HCT116 (cell line): ENCODE measurements at regions of chr5 and their contacts with region 1.

Region 1: GRCh38 chr5:6765612-6766525 is 52.6 kb downstream of the TENT4A start:
- DNase-seq: peak; percentile 71
- ATAC-seq: peak; percentile 79
- H3K4me3 ChIP-seq: peak overlapping the region; percentile 28 to 48
- H3K27ac ChIP-seq: peak overlapping the region; percentile 50
- H3K4me1 ChIP-seq: peaks cover 21 to 23% of the 10 kb centered on the region in 2 experiments
- H3K27me3 ChIP-seq: no peaks in the 10 kb centered on the region
- CTCF ChIP-seq: peak; percentile 68 to 93 (median 88); a peak in 5 of 6 replicates
- POLR2A ChIP-seq: no peak
- RAD21 ChIP-seq: peak; percentile 89

Region 2: GRCh38 chr5:6837519-6838110 is 71.7 kb after region 1 on chr5:
- CTCF ChIA-PET with region 1: interaction called, 4 read pairs
- POLR2A ChIA-PET with region 1: no interaction called
- RAD21 ChIA-PET with region 1: no interaction called
- intact Hi-C with region 1: loop called (anchors 1 kb)
- DNase-seq: no peak
- ATAC-seq: peak; percentile 66
- H3K4me3 ChIP-seq: no peak overlapping the region
- H3K27ac ChIP-seq: no peak overlapping the region
- H3K4me1 ChIP-seq: no peaks in the 10 kb centered on the region
- H3K27me3 ChIP-seq: no peaks in the 10 kb centered on the region
- CTCF ChIP-seq: peak; percentile 37 to 87 (median 86); a peak in 5 of 6 replicates
- POLR2A ChIP-seq: no peak
- RAD21 ChIP-seq: peak; percentile 58

Region 3: DNA sequence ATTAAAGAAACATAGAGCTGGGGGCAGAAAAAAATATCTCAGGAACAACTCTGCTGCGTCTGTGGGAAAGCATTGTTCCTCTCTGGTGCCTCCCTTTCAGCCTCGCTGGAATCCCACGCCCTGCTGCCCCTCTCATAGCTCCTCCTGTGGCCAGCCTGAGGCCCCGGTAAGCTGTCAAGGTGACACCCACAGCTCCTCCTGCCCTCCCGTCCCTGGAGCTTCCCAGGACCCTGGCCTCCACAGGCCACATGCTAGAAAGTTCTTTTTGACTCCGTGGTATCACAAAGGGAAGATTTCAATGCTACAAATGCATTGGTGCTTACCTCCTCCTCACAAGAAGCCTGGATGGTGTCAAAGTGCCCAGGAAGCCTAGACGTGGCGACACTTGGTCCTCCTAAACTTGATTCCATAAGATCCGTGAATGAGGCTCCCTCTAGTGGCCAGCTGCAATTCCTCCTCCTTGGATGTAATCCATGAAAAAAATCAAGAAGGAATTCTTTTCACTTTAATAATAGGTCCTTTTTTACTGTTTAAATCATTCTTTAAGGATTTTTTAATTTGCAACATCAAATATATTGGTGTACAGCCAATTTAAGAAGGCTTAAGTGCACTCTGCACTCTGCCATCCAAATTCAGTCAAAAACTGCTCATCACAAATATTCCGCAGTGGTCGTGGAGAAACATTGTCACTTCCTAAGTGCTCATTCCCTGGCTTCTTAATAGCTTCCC is 980.2 kb after region 1 on chr5:
- CTCF ChIA-PET with region 1: interaction called, 7 read pairs
- POLR2A ChIA-PET with region 1: no interaction called
- RAD21 ChIA-PET with region 1: no interaction called
- intact Hi-C with region 1: loop called (anchors 1 kb)
- DNase-seq: peak; percentile 41
- ATAC-seq: peak; percentile 77
- H3K4me3 ChIP-seq: no peak overlapping the region
- H3K27ac ChIP-seq: no peak overlapping the region
- H3K4me1 ChIP-seq: no peaks in the 10 kb centered on the region
- H3K27me3 ChIP-seq: no peaks in the 10 kb centered on the region
- CTCF ChIP-seq: peak; percentile 50 to 92 (median 83); a peak in 5 of 6 replicates
- POLR2A ChIP-seq: no peak
- RAD21 ChIP-seq: peak; percentile 60

Region 4: GRCh38 chr5:7754992-7755596 is 989.2 kb after region 1 on chr5:
- CTCF ChIA-PET with region 1: interaction called, 4 read pairs
- POLR2A ChIA-PET with region 1: no interaction called
- RAD21 ChIA-PET with region 1: no interaction called
- intact Hi-C with region 1: loop called (anchors 2 kb)
- DNase-seq: peak; percentile 41
- ATAC-seq: peak; percentile 100
- H3K4me3 ChIP-seq: no peak overlapping the region
- H3K27ac ChIP-seq: no peak overlapping the region
- H3K4me1 ChIP-seq: no peaks in the 10 kb centered on the region
- H3K27me3 ChIP-seq: peaks cover 2% of the 10 kb centered on the region; the same call in 1 of the 2 replicates
- CTCF ChIP-seq: peak; percentile 52 to 94 (median 90); a peak in 5 of 6 replicates
- POLR2A ChIP-seq: no peak
- RAD21 ChIP-seq: peak; percentile 75

Region 5: GRCh38 chr5:7815892-7816534 is 1050.1 kb after region 1 on chr5:
- CTCF ChIA-PET with region 1: interaction called, 3 read pairs
- POLR2A ChIA-PET with region 1: no interaction called
- RAD21 ChIA-PET with region 1: no interaction called
- intact Hi-C with region 1: loop called (anchors 2 kb)
- DNase-seq: peak; percentile 63
- ATAC-seq: peak; percentile 99
- H3K4me3 ChIP-seq: no peak overlapping the region
- H3K27ac ChIP-seq: no peak overlapping the region
- H3K4me1 ChIP-seq: peaks cover 0 to 2% of the 10 kb centered on the region in 2 experiments; a peak in 1 of 4 replicates
- H3K27me3 ChIP-seq: peaks cover 24% of the 10 kb centered on the region
- CTCF ChIP-seq: peak; percentile 84 to 99 (median 98)
- POLR2A ChIP-seq: no peak
- RAD21 ChIP-seq: peak; percentile 75

Region 6: GRCh38 chr5:7856855-7857254 is 1091.0 kb after region 1 on chr5:
- CTCF ChIA-PET with region 1: no interaction called
- POLR2A ChIA-PET with region 1: no interaction called
- RAD21 ChIA-PET with region 1: no interaction called
- intact Hi-C with region 1: loop called (anchors 5 kb)
- DNase-seq: peak; percentile 15
- ATAC-seq: peak; percentile 90
- H3K4me3 ChIP-seq: no peak overlapping the region
- H3K27ac ChIP-seq: no peak overlapping the region
- H3K4me1 ChIP-seq: no peaks in the 10 kb centered on the region
- H3K27me3 ChIP-seq: no peaks in the 10 kb centered on the region
- CTCF ChIP-seq: peak; percentile 42 to 84 (median 68); a peak in 5 of 6 replicates
- POLR2A ChIP-seq: no peak
- RAD21 ChIP-seq: peak; percentile 68